ENCODE measurements at regions of chr7 and their contacts with region 1.

Region 1: GRCh38 chr7:2519119-2519930 is at the start of gene LFNG:
- DNase-seq: peak; percentile 88
- ATAC-seq: peak; percentile 70
- H3K4me3 Mint-ChIP-seq: peak within 1 kb of the TSS; percentile 97
- H3K27ac Mint-ChIP-seq: peak within 1 kb of the TSS; percentile 87
- H3K4me1 Mint-ChIP-seq: peaks cover 28% of the 10 kb centered on the region
- H3K27me3 Mint-ChIP-seq: no peaks in the 10 kb centered on the region
- CTCF ChIP-seq: no peak
- total RNA-seq, gene LFNG: 50.6 TPM

Region 2: DNA sequence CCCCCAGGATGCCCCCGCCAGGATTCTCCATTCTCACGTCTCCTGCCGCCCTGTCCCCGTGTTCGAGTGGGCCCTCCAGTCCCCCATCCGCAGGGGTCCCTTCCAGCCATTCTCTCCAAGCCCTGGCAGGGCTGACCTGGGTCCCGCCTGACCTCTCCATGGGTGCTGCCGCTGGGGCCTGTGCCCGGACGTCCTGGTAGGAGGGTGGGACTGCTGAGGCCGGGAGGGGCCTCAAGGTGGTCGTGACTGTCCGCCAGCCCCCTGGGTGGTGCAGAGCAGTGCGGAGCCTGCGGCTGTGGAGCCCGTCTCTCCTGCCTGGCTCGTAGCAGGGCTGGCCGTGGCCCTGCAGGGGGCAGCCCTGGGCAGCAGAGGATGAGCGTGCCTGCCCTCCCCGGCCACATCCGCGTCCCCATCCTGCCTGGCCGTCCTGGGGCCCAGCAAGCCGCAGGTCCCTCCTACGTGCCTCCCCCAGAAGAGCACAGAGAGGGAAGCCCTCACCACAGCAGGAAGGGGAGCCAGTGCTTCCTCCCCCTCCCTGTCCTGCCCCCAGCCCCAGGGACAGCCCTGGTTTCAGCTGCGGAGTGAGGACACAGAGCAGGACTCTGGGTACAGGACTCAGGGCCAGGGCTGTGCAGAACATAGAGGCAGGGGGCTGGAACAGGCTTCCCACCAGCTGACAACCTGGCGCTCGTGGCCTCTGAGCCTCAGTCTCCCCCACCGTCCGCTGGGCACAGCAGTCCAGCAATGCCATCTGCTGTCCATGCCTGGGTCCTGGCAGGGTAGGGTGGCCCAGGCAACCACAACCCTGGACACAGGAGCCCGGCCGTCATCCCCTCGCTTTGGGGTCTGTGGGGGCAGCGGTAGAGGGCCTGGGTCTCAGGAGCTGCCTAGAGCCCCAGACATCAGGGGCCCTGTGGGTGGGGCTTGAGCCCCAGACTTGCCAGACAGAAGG is 41.6 kb before region 1 on chr7:
- CTCF ChIA-PET with region 1: no interaction called
- POLR2A ChIA-PET with region 1: interaction called, 3 read pairs
- intact Hi-C with region 1: loop called (anchors 5 kb)
- DNase-seq: peak; percentile 82
- ATAC-seq: peak; percentile 98
- H3K4me3 Mint-ChIP-seq: no peak overlapping the region
- H3K27ac Mint-ChIP-seq: no peak overlapping the region
- H3K4me1 Mint-ChIP-seq: no peaks in the 10 kb centered on the region
- H3K27me3 Mint-ChIP-seq: no peaks in the 10 kb centered on the region
- CTCF ChIP-seq: peak; percentile 90

Region 3: GRCh38 chr7:2508327-2509215 is 10.8 kb before region 1 on chr7:
- CTCF ChIA-PET with region 1: interaction called, 4 read pairs
- POLR2A ChIA-PET with region 1: interaction called, 60 read pairs
- intact Hi-C with region 1: no loop called
- DNase-seq: peak; percentile 89
- ATAC-seq: peak; percentile 64
- H3K4me3 Mint-ChIP-seq: peak overlapping the region; percentile 68
- H3K27ac Mint-ChIP-seq: peak overlapping the region; percentile 84
- H3K4me1 Mint-ChIP-seq: peaks cover 57% of the 10 kb centered on the region
- H3K27me3 Mint-ChIP-seq: no peaks in the 10 kb centered on the region
- CTCF ChIP-seq: no peak

Region 4: DNA sequence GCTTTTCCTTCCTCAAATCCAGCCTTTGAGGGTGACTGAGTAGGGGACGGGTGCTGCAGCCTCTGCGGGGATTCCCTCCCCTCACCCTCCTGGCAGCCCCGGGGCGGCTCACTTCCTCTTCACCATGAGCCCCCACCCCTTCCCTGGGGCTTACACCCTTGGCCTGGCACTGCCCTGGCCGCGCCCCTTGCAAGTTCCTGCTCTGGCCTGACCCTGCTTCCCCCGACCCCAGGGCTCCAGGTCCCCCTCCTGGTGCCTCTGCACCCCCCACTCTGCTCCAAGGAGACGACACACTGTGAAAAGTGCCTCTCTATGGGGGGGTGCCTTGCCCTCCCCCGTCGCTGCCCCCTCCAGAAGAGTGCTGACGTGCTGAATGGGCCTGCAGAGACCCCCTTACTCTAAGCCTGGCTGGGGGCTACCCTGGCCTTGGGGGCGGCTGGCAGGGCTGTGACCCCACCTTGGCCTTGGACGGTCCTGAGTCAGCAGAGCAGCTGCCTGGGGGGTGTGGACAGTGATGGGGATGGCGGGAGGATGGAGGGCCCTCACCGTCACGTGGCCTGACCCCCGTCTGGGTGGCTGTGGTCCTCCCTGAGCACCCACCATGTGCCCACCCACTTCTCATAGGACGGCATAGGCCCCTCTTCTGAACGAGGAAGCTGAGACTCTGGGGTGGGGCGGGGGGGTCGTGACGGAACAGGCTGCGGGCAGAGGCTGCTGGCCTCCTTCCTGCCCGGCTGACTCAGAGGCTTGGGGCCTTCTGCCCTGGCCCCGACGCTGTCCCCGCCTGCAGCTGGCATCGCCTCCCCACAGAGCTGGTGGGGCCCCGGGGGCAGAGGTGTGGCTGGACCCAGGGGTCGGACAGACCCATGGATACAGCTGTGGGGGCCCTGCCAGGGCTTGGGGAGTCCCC is 10.1 kb after region 1 on chr7:
- CTCF ChIA-PET with region 1: no interaction called
- POLR2A ChIA-PET with region 1: interaction called, 7 read pairs
- intact Hi-C with region 1: loop called (anchors 1 kb)
- DNase-seq: peak; percentile 81
- ATAC-seq: peak; percentile 58
- H3K4me3 Mint-ChIP-seq: peak overlapping the region; percentile 69
- H3K27ac Mint-ChIP-seq: peak overlapping the region; percentile 92
- H3K4me1 Mint-ChIP-seq: peaks cover 57% of the 10 kb centered on the region
- H3K27me3 Mint-ChIP-seq: no peaks in the 10 kb centered on the region
- CTCF ChIP-seq: no peak

Region 5: GRCh38 chr7:2545746-2546425 is 26.6 kb after region 1 on chr7:
- CTCF ChIA-PET with region 1: no interaction called
- POLR2A ChIA-PET with region 1: no interaction called
- intact Hi-C with region 1: no loop called
- DNase-seq: no peak
- ATAC-seq: no peak
- H3K4me3 Mint-ChIP-seq: no peak overlapping the region
- H3K27ac Mint-ChIP-seq: no peak overlapping the region
- H3K4me1 Mint-ChIP-seq: peaks cover 8% of the 10 kb centered on the region
- H3K27me3 Mint-ChIP-seq: no peaks in the 10 kb centered on the region
- CTCF ChIP-seq: no peak

Region 6: DNA sequence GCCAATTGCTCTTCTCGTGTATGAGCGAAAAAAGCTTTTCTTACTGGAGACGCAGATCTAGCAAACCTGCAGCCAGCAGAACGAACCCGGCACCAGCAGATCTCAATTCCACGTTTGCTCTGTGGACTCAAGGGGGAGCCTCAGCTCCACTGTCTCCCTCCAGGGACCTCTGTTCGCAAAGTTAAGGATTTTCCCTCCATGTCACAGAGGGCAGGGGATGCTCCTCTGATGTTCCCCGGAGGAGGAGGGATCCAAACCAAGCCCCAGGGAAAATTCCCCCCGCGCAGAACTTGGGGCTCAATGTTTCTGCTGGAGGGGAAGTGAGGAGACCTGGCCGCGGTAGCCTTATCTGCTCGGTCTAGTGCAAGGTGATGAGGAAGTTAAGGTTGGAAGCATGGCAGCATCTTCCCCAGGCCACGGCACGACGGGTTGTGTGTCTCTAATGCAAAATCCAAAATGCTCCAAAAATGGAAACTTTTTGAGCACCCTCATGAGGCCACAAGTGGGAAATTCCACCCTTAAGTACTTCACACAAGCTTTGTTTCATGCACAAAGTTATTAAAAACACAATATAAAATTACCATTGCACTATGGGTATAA is 48.5 kb after region 1 on chr7:
- CTCF ChIA-PET with region 1: no interaction called
- POLR2A ChIA-PET with region 1: no interaction called
- intact Hi-C with region 1: no loop called
- DNase-seq: no peak
- ATAC-seq: no peak
- H3K4me3 Mint-ChIP-seq: no peak overlapping the region
- H3K27ac Mint-ChIP-seq: no peak overlapping the region
- H3K4me1 Mint-ChIP-seq: peaks cover 6% of the 10 kb centered on the region
- H3K27me3 Mint-ChIP-seq: no peaks in the 10 kb centered on the region
- CTCF ChIP-seq: peak; percentile 18

Region 7: GRCh38 chr7:2800931-2801688 is 281.8 kb after region 1 on chr7:
- CTCF ChIA-PET with region 1: no interaction called
- POLR2A ChIA-PET with region 1: no interaction called
- intact Hi-C with region 1: no loop called
- DNase-seq: peak; percentile 46
- ATAC-seq: peak; percentile 34
- H3K4me3 Mint-ChIP-seq: no peak overlapping the region
- H3K27ac Mint-ChIP-seq: no peak overlapping the region
- H3K4me1 Mint-ChIP-seq: peaks cover 47% of the 10 kb centered on the region
- H3K27me3 Mint-ChIP-seq: no peaks in the 10 kb centered on the region
- CTCF ChIP-seq: no peak